Dendritic cell treated with granulocyte-macrophage colony-stimulating factor and Interleukin-4, amounts not matched to agents 40 ng/mL and 50 ng/mL, for 4 days (primary cell): ENCODE measurements at regions of chr2 and their contacts with region 1.

Region 1: GRCh38 chr2:195498176-195498575 is 158.8 kb upstream of the SLC39A10 start:
- H3K4me3 Mint-ChIP-seq: no peak overlapping the region
- H3K27ac Mint-ChIP-seq: no peak overlapping the region
- H3K4me1 Mint-ChIP-seq: no peaks in the 10 kb centered on the region
- H3K27me3 Mint-ChIP-seq: no peaks in the 10 kb centered on the region

Region 2: GRCh38 chr2:195937176-195937575 is 439.0 kb after region 1 on chr2:
- intact Hi-C with region 1: loop called (anchors 2 kb)
- H3K4me3 Mint-ChIP-seq: no peak overlapping the region
- H3K27ac Mint-ChIP-seq: no peak overlapping the region
- H3K4me1 Mint-ChIP-seq: no peaks in the 10 kb centered on the region
- H3K27me3 Mint-ChIP-seq: no peaks in the 10 kb centered on the region

Region 3: GRCh38 chr2:196068271-196069209 is 570.4 kb after region 1 on chr2 and contains the start of gene DNAH7:
- intact Hi-C with region 1: loop called (anchors 10 kb)
- H3K4me3 Mint-ChIP-seq: peak within 1 kb of the TSS; percentile 89
- H3K27ac Mint-ChIP-seq: peak within 1 kb of the TSS; percentile 88
- H3K4me1 Mint-ChIP-seq: no peaks in the 10 kb centered on the region
- H3K27me3 Mint-ChIP-seq: no peaks in the 10 kb centered on the region